ENCODE measurements at regions of chr12 and their contacts with region 1.

Region 1: DNA sequence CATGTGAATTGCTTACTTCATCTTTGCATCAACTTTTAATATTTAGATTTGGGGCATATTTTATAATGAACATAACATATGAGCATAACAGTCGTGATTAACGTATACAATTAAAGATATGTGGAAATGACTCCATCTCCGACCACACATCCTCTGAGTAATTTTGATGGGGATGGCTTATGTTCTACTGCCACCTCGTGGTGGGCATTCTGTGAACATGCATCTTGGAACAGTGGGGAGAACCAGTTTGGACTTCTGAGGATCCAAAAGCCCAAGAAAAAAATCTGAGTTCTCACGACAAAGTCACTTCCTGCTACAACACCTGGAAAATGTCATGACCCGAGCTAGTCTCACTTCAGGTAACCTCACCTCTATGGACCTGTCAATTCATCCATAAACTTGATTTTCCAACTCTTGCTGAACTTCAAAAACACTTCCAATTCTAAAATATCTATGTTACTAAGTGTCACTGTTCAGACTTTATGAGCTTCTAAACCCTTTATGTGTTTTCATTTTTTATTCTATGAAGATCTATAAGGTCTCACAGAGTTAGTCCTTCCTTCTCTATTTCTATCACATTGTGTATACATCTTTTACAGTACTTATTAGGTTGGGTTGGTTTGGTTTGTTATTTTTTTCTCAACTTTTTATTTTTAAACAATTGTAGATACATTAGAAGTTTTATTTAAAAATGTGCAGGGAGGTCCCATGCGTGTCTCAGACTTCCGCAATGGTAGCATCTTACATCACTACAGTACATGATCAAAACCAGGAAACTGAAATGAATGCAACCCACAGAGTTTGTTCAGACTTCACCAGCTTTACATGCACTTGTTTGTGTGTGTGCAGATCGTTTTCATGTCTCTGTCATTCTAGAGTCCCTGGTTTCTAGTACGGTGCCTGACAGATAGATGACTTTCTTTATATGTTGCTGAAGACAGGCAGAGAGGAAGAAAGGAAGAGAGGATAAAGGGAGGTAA is 38.2 kb upstream of the STAB2 start:
- DNase-seq: peak; percentile 22 to 83
- ATAC-seq: peak in 1 of 3 donors; percentile 55
- H3K4me3 ChIP-seq: no peak overlapping the region
- H3K4me3 Mint-ChIP-seq: no peak overlapping the region
- H3K27ac ChIP-seq: no peak overlapping the region
- H3K27ac Mint-ChIP-seq: no peak overlapping the region
- H3K4me1 ChIP-seq: no peaks in the 10 kb centered on the region
- H3K4me1 Mint-ChIP-seq: no peaks in the 10 kb centered on the region
- H3K27me3 ChIP-seq: no peaks in the 10 kb centered on the region
- H3K27me3 Mint-ChIP-seq: peaks cover 15 to 30% of the 10 kb centered on the region in 2 donors
- CTCF ChIP-seq: peak; percentile 63

Region 2: GRCh38 chr12:101939856-101940265 is 1609.1 kb before region 1 on chr12:
- intact Hi-C with region 1: loop called (anchors 10 kb)
- DNase-seq: peak; percentile 21 to 76
- ATAC-seq: peak; percentile 61 to 76 (median 65)
- H3K4me3 ChIP-seq: no peak overlapping the region
- H3K4me3 Mint-ChIP-seq: no peak overlapping the region
- H3K27ac ChIP-seq: no peak overlapping the region
- H3K27ac Mint-ChIP-seq: no peak overlapping the region
- H3K4me1 ChIP-seq: no peaks in the 10 kb centered on the region
- H3K4me1 Mint-ChIP-seq: no peaks in the 10 kb centered on the region
- H3K27me3 ChIP-seq: no peaks in the 10 kb centered on the region
- H3K27me3 Mint-ChIP-seq: peaks cover 16 to 37% of the 10 kb centered on the region in 2 donors
- CTCF ChIP-seq: peak; percentile 62

Region 3: GRCh38 chr12:102883204-102883799 is 665.6 kb before region 1 on chr12:
- intact Hi-C with region 1: loop called (anchors 2 kb)
- DNase-seq: peak in 1 of 2 donors; percentile 54
- ATAC-seq: no peak
- H3K4me3 ChIP-seq: no peak overlapping the region
- H3K4me3 Mint-ChIP-seq: no peak overlapping the region
- H3K27ac ChIP-seq: no peak overlapping the region
- H3K27ac Mint-ChIP-seq: no peak overlapping the region
- H3K4me1 ChIP-seq: no peaks in the 10 kb centered on the region
- H3K4me1 Mint-ChIP-seq: no peaks in the 10 kb centered on the region
- H3K27me3 ChIP-seq: no peaks in the 10 kb centered on the region
- H3K27me3 Mint-ChIP-seq: peaks cover 0 to 7% of the 10 kb centered on the region in 2 donors
- CTCF ChIP-seq: peak; percentile 10

Region 4: GRCh38 chr12:102948941-102949352 is 600.0 kb before region 1 on chr12:
- intact Hi-C with region 1: loop called (anchors 1 kb)
- DNase-seq: peak in 1 of 2 donors; percentile 69
- ATAC-seq: no peak
- H3K4me3 ChIP-seq: no peak overlapping the region
- H3K4me3 Mint-ChIP-seq: no peak overlapping the region
- H3K27ac ChIP-seq: no peak overlapping the region
- H3K27ac Mint-ChIP-seq: no peak overlapping the region
- H3K4me1 ChIP-seq: no peaks in the 10 kb centered on the region
- H3K4me1 Mint-ChIP-seq: no peaks in the 10 kb centered on the region
- H3K27me3 ChIP-seq: peaks cover 2% of the 10 kb centered on the region
- H3K27me3 Mint-ChIP-seq: peaks cover 17 to 31% of the 10 kb centered on the region in 2 donors
- CTCF ChIP-seq: peak; percentile 68

Region 5: DNA sequence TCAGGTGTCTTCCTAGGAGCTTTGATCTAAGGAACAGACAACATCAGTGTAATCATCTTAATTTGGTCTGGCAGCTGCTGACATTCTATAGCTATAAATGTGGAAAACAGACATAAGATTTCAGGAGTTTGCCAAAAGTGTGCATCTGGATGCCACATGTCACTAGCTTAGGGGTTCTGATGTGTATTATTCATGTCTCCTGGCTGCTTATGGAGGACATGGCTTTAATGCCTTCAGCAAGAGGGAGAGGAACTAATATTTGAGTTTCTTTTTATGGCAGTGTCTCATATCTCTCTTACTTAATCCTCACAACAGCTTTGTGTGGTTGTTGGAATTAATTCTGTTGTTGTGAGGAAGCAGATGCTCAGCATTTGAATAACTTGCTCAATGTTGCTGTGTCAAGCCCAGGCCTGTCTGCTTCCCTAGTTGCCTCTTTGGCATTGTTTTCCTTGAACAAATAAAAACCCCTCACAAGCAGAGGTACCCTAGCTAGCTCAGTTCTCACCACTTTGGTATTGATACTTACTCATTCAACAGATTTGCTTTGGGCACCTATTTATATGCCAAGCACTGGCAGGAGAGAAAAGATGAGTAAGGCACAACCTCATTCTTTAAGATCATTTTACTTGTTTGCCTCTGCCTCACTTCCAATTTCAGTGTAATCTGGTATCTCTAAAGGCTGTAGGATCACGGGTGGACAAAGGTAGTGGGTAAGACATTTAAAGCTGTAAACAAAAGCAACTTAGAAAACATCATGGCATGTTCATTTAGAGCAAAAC is 714.9 kb after region 1 on chr12:
- intact Hi-C with region 1: no loop called
- DNase-seq: no peak
- ATAC-seq: no peak
- H3K4me3 ChIP-seq: no peak overlapping the region
- H3K4me3 Mint-ChIP-seq: no peak overlapping the region
- H3K27ac ChIP-seq: no peak overlapping the region
- H3K27ac Mint-ChIP-seq: no peak overlapping the region
- H3K4me1 ChIP-seq: no peaks in the 10 kb centered on the region
- H3K4me1 Mint-ChIP-seq: no peaks in the 10 kb centered on the region
- H3K27me3 ChIP-seq: no peaks in the 10 kb centered on the region
- H3K27me3 Mint-ChIP-seq: no peaks in the 10 kb centered on the region
- CTCF ChIP-seq: no peak